ENCODE measurements at regions of chr18 and their contacts with region 1.

Region 1: DNA sequence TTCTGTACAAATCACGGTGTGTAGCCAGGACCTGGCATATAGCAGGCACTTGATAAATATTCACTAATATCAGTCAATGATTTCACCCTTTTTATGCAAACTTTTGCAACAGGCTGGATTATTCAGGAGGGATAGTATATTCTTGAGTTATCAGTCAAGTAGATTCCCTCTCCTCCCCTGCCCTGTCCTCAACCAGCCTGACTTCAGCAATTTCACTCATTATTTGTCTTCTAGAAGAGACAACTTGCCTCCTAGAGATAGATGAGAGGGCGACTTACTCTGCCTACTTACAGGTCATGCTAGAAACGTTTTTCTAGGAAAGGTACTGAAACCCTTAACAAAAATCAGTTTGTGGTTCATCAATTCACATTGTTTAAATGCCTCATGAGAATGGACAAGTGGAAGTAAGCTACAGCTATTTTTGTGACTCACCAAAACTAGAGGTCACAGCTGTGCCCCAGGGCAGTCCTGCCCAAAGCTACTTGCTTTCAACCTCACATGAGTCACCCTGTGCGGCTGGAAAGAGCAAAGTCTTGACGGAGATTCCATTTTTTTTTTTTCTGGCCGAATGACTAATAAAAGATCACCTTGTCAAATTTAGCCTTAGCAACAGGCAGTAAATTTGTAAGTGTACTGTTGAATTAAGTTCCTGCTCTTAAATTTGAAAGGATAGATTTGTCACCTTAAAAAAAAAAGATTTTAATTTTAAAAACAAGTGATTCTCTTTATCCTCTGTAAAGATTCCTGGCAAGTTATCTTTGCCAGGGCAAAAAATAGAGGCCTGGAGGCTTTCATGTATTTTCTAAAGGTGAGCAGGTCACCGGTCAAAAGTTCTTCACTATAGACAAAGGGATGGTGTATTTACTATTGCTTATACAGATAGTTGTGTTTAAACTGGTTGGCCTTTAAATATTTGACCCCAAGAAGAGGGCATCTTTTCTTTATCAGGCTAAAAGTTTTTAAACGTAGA is 109.0 kb upstream of the SLC35G4 start:
- DNase-seq: peak; percentile 98
- ATAC-seq: peak; percentile 97
- H3K4me3 ChIP-seq: peak overlapping the region in 1 of 3 experiments; percentile 13; a peak in 1 of 6 replicates
- H3K27ac ChIP-seq: peak overlapping the region; percentile 98
- H3K4me1 ChIP-seq: peaks cover 79% of the 10 kb centered on the region
- H3K27me3 ChIP-seq: no peaks in the 10 kb centered on the region
- CTCF ChIP-seq: no peak
- EP300 ChIP-seq: peak; percentile 71 to 90; a peak in 3 of 4 replicates
- POLR2A ChIP-seq: no peak
- RAD21 ChIP-seq: no peak

Region 2: DNA sequence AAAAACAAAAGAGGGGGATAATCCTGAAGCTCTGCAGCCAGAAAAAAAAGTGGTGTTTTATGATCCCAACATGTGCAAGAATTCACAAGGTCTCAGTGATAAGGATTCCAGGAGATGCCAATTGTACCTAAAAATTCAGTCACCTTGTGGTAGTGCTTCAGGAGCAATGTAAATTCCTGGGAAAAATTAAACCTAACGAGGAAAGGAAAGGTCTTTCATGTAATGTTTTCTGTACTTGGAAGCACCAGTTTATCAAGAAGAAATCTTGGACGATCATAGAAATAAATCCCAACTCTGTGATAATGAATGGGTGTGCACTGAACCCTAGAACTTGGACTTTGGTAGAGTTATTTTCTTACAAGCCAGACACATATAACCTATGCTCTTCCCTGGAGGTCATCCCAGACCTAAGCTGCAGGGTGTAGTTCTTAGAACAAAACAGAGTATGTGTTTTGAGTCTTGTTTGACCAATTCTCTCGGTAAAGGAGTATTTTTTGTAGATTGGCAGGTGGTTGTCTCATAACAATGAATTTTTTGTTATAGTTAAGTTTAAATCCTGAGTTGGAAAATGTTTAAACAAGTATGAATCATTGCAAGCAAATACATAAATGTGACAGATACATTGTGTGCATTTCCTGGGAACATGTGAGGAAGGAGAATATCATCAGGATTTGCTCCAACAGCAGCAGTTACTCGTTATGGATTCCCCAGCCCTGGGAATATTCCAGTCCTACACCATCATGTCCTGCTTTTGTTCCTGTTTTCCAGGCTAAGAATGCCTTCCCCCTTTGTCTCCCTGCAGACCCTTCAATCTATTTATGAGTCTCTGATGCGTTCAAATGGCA is 750.0 kb before region 1 on chr18:
- CTCF ChIA-PET with region 1: no interaction called
- POLR2A ChIA-PET with region 1: no interaction called
- in situ Hi-C with region 1: no loop called
- intact Hi-C with region 1: no loop called
- DNase-seq: peak; percentile 60
- ATAC-seq: peak; percentile 64; the same call in 2 of the 3 replicates
- H3K4me3 ChIP-seq: no peak overlapping the region
- H3K27ac ChIP-seq: no peak overlapping the region
- H3K4me1 ChIP-seq: peaks cover 21% of the 10 kb centered on the region
- H3K27me3 ChIP-seq: no peaks in the 10 kb centered on the region
- CTCF ChIP-seq: no peak
- EP300 ChIP-seq: no peak
- POLR2A ChIP-seq: no peak
- RAD21 ChIP-seq: no peak

Region 3: DNA sequence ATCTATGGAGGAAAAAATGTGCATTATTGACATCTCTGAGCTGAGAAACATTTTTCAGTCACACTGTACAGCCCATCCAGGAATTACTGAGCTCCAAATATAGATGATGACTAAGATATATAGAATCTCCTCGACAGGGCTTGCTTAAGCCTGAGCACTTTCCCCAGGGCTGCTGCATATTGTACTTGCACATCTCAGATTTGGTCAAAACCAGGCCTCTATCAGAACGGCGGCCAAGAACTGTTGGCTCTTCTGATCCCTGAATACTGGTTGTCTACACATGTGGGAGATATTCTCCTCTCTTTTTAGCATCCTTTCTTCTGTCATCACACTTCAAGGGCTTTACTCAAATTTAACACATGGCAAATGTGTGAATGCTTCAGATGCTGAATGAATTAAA is 92.5 kb before region 1 on chr18:
- CTCF ChIA-PET with region 1: no interaction called
- POLR2A ChIA-PET with region 1: no interaction called
- in situ Hi-C with region 1: no loop called
- intact Hi-C with region 1: loop called (anchors 5 kb)
- DNase-seq: no peak
- ATAC-seq: no peak
- H3K4me3 ChIP-seq: no peak overlapping the region
- H3K27ac ChIP-seq: no peak overlapping the region
- H3K4me1 ChIP-seq: peaks cover 18% of the 10 kb centered on the region
- H3K27me3 ChIP-seq: no peaks in the 10 kb centered on the region; a peak in 1 of 5 replicates
- CTCF ChIP-seq: no peak
- EP300 ChIP-seq: no peak
- POLR2A ChIP-seq: no peak
- RAD21 ChIP-seq: no peak